ENCODE measurements at regions of chr14 and their contacts with region 1.

Region 1: GRCh38 chr14:77124345-77125280 is 17.0 kb downstream of the ZDHHC22 start:
- H3K4me3 ChIP-seq: peak overlapping the region; percentile 35
- H3K27ac ChIP-seq: no peak overlapping the region
- H3K4me1 ChIP-seq: no peaks in the 10 kb centered on the region; the same call in 1 of the 2 replicates
- CTCF ChIP-seq: no peak

Region 2: GRCh38 chr14:77087631-77088030 is 37.0 kb before region 1 on chr14:
- CTCF ChIA-PET with region 1: no interaction called
- POLR2A ChIA-PET with region 1: no interaction called
- H3K4me3 ChIP-seq: no peak overlapping the region
- H3K27ac ChIP-seq: no peak overlapping the region
- H3K4me1 ChIP-seq: no peaks in the 10 kb centered on the region; the same call in 1 of the 2 replicates
- CTCF ChIP-seq: no peak

Region 3: GRCh38 chr14:77097700-77098528 is 26.7 kb before region 1 on chr14 and contains the start of gene CIPC:
- CTCF ChIA-PET with region 1: interaction called, 14 read pairs
- POLR2A ChIA-PET with region 1: interaction called, 4 read pairs
- H3K4me3 ChIP-seq: peak within 1 kb of the TSS; percentile 88
- H3K27ac ChIP-seq: peak within 1 kb of the TSS; percentile 87
- H3K4me1 ChIP-seq: peaks cover 18% of the 10 kb centered on the region
- CTCF ChIP-seq: peak; percentile 41; the same call in 1 of the 2 replicates

Region 4: DNA sequence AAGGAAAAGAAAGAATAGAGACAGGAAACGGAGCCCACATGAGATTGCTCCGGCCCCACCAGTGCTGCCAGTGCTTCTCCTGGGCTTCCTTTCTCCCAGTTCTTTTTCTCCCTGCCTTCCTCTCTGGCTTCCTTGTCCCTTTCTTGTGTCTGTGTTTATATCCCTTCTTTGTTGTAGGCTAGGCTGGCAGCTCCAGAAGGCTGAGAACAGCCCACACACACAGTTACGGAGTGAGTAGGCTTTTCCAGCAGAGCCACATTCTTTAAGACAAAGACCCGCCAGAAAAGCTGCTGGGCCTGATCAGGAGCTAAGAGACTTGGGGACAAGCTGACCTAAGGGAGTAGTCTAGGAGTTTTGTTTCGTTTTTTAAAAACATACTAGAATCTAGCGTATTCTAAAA is 13.6 kb before region 1 on chr14:
- CTCF ChIA-PET with region 1: interaction called, 15 read pairs
- POLR2A ChIA-PET with region 1: no interaction called
- H3K4me3 ChIP-seq: no peak overlapping the region
- H3K27ac ChIP-seq: no peak overlapping the region
- H3K4me1 ChIP-seq: no peaks in the 10 kb centered on the region
- CTCF ChIP-seq: no peak

Region 5: GRCh38 chr14:77139540-77140358 is 15.1 kb after region 1 on chr14:
- CTCF ChIA-PET with region 1: interaction called, 19 read pairs
- POLR2A ChIA-PET with region 1: interaction called, 3 read pairs
- H3K4me3 ChIP-seq: peak overlapping the region; percentile 47
- H3K27ac ChIP-seq: no peak overlapping the region
- H3K4me1 ChIP-seq: no peaks in the 10 kb centered on the region; the same call in 1 of the 2 replicates
- CTCF ChIP-seq: peak; percentile 75

Measured in HEK293 (cell line).